ENCODE measurements at regions of chr9 and their contacts with region 1.

Region 1: DNA sequence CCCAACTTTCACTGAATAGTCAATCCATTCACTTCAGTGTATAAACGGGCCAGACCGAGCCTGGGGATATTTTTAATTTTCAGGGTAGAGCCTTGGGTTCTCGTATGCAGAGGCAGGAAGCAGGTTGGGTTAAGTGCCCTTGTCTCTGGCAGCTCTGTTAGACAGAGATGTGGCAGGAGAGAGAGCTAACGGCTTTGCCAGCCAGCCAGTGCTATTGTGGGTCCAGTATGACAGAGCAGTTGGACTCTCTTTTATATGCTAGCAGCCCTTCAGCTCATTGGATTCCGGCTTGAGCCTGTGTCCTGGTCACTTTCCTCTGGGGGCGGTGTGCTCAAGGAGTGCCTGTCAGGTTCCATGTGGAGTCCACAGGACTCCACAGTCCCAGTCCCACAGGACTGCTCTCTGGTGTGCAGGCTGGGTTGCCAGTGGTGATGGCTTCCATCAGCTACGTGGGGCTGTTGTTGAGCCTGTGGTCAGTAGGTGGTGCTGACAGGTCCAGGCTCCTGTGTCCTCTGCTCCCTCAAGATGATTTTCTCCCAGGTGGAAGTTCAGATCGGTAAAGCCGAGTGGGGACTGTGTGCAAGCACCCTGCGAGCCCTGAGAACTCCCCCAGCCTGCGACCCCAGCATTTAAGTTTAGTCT is 14.3 kb downstream of the CLTA start:
- DNase-seq: no peak
- H3K4me3 Mint-ChIP-seq: no peak overlapping the region
- H3K27ac Mint-ChIP-seq: no peak overlapping the region
- H3K4me1 Mint-ChIP-seq: peaks cover 47% of the 10 kb centered on the region
- H3K27me3 Mint-ChIP-seq: no peaks in the 10 kb centered on the region

Region 2: DNA sequence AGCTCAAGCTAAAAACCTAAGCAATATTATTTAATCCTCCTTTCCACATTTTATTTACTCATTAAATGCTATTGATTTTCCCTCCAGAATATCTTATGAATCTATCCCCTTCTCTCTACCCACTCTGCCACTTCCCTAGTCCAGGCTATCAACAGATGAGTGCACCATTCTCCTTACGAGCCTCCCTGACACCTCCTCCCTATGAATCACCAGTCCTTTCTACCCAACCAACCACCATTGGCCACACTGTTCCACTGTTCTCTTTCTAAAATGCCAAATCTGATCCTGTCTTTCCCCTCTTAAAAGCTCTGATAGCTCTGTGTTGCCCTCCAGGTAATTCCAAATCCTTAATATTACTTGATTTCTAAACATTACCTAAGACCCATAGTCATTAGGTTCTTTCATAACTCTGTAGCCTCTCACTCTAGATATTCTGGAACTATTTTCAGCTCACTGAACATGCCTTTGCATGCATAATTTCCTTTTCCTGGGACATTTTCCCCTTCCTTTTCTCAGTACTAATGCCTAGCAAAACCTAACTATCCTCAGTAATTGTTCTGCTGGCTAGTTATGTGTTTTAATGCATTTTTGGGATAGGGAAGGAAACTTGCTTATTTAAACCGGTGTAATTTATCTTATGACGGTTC is 916.9 kb before region 1 on chr9:
- CTCF ChIA-PET with region 1: no interaction called
- POLR2A ChIA-PET with region 1: no interaction called
- DNase-seq: no peak
- H3K4me3 Mint-ChIP-seq: no peak overlapping the region
- H3K27ac Mint-ChIP-seq: no peak overlapping the region
- H3K4me1 Mint-ChIP-seq: no peaks in the 10 kb centered on the region
- H3K27me3 Mint-ChIP-seq: peaks cover 12% of the 10 kb centered on the region

Region 3: GRCh38 chr9:36190388-36191287 is 14.4 kb before region 1 on chr9 and contains the start of gene CLTA:
- CTCF ChIA-PET with region 1: interaction called, 24 read pairs
- POLR2A ChIA-PET with region 1: no interaction called
- DNase-seq: peak; percentile 98
- H3K4me3 Mint-ChIP-seq: peak within 1 kb of the TSS; percentile 97
- H3K27ac Mint-ChIP-seq: peak within 1 kb of the TSS; percentile 93
- H3K4me1 Mint-ChIP-seq: peaks cover 55% of the 10 kb centered on the region
- H3K27me3 Mint-ChIP-seq: peaks cover 8% of the 10 kb centered on the region
- total RNA-seq, gene CLTA: 156 to 158 TPM

Measured in activated CD4-positive, alpha-beta T cell treated with anti-CD3 and anti-CD28 coated beads, Interleukin-2, amount 10 ng/mL, durations not matched to agents 7 days and 5 days (primary cell).